Esophagus muscularis mucosa (tissue), 4 donors: ENCODE measurements at regions of chr20 and their contacts with region 1.

Region 1: GRCh38 chr20:43583982-43584432 is 6.7 kb upstream of the IFT52 start:
- DNase-seq: no peak
- H3K4me3 ChIP-seq: no peak overlapping the region
- H3K27ac ChIP-seq: no peak overlapping the region
- H3K4me1 ChIP-seq: no peaks in the 10 kb centered on the region
- H3K27me3 ChIP-seq: no peaks in the 10 kb centered on the region
- CTCF ChIP-seq: no peak
- EP300 ChIP-seq: no peak
- POLR2A ChIP-seq: no peak

Region 2: DNA sequence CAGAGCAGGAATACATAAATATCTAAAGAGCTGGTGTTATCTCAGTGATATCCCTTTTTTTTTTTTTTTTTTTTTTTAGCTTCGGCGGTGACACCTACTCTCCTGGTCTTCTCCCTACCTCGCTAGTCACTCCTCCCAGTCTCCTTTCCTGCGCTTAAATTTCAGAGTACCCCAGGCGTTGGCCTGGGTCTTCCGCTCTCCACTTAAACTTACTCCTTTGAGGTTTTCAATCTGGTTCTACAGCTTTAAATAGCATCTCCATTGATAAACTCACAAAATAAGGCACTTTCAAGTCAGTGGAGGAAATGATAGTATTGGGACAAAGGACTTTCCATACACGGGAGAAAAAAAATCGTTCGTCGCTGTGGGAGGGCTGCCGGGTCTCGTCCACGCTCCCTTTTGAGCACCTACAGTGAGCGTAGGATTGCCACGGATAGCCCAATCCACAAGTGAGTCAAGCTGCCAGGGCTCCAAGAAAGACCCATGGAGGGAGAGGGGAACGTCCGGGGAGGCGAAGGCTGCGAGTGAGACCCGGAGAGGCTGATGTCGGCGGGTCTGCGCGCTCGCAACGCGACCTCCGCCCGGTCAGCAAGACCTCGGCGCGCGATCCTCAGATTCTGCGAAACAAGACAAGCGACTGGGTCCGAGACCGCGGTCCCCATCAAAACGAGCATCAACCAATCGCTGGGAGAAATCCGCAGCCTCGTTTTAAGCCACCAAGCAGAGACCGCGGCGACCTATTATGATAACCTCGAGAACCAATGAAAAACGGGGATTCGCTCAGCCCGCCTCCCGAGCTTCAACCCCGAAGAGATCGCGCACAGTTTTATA is 127.0 kb before region 1 on chr20:
- intact Hi-C with region 1: loop called (anchors 10 kb)
- DNase-seq: peak; percentile 99
- H3K4me3 ChIP-seq: peak overlapping the region; percentile 78 to 96 (median 92)
- H3K27ac ChIP-seq: peak overlapping the region; percentile 99 to 100 (median 100)
- H3K4me1 ChIP-seq: peaks cover 15 to 32% (median 25%) of the 10 kb centered on the region in 4 donors
- H3K27me3 ChIP-seq: peaks cover 0 to 6% (median 0%) of the 10 kb centered on the region in 4 donors
- CTCF ChIP-seq: no peak
- EP300 ChIP-seq: no peak
- POLR2A ChIP-seq: no peak